Activated CD8-positive, alpha-beta memory T cell treated with anti-CD3 and anti-CD28 coated beads, Interleukin-2, amount 10 ng/mL, durations not matched to agents 7 days and 5 days (primary cell): ENCODE measurements at regions of chr20 and their contacts with region 1.

Region 1: GRCh38 chr20:44901974-44902373 is 7.9 kb upstream of the PABPC1L start:
- DNase-seq: no peak
- ATAC-seq: no peak
- H3K4me3 Mint-ChIP-seq: no peak overlapping the region
- H3K27ac Mint-ChIP-seq: no peak overlapping the region
- H3K4me1 Mint-ChIP-seq: peaks cover 33% of the 10 kb centered on the region
- H3K27me3 Mint-ChIP-seq: no peaks in the 10 kb centered on the region

Region 2: GRCh38 chr20:44629542-44629941 is 272.4 kb before region 1 on chr20:
- CTCF ChIA-PET with region 1: no interaction called
- DNase-seq: no peak
- ATAC-seq: no peak
- H3K4me3 Mint-ChIP-seq: no peak overlapping the region
- H3K27ac Mint-ChIP-seq: no peak overlapping the region
- H3K4me1 Mint-ChIP-seq: peaks cover 9% of the 10 kb centered on the region
- H3K27me3 Mint-ChIP-seq: no peaks in the 10 kb centered on the region

Region 3: GRCh38 chr20:44891826-44892225 is 10.1 kb before region 1 on chr20:
- CTCF ChIA-PET with region 1: interaction called, 10 read pairs
- DNase-seq: no peak
- ATAC-seq: no peak
- H3K4me3 Mint-ChIP-seq: no peak overlapping the region
- H3K27ac Mint-ChIP-seq: no peak overlapping the region
- H3K4me1 Mint-ChIP-seq: peaks cover 71% of the 10 kb centered on the region
- H3K27me3 Mint-ChIP-seq: no peaks in the 10 kb centered on the region